Heart left ventricle (tissue), 16 donors: ENCODE measurements at regions of chr20 and their contacts with region 1.

Region 1: GRCh38 chr20:60050158-60050947 is 92.1 kb downstream of the CDH26 start:
- DNase-seq: no peak
- ATAC-seq: no peak
- H3K4me3 ChIP-seq: no peak overlapping the region
- H3K27ac ChIP-seq: no peak overlapping the region
- H3K4me1 ChIP-seq: peaks cover 0 to 22% (median 0%) of the 10 kb centered on the region in 12 donors
- H3K27me3 ChIP-seq: peaks cover 0 to 11% (median 4%) of the 10 kb centered on the region in 9 donors
- CTCF ChIP-seq: peak in 2 of 12 donors; percentile 12 to 26
- POLR2A ChIP-seq: no peak

Region 2: DNA sequence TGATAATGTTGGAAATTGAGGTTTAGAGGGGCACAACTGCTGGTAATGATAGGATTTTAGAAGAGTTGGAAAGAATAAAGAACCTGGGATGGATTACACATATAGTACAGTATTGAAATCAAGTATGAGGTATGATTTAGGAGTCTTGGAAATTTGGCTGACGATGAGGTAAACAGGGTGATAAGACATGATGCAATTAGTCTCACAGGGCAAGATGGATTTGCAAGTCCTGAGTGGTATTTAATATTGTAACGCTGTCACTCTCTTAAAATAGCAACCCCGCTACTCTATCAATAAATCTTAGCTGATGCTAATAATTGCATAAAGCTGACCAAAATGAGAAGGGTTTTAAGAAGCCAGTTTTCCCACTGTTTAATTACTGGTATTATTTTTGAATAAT is 187.3 kb before region 1 on chr20:
- intact Hi-C with region 1: no loop called
- DNase-seq: no peak
- ATAC-seq: peak in 1 of 4 donors; percentile 54
- H3K4me3 ChIP-seq: no peak overlapping the region
- H3K27ac ChIP-seq: no peak overlapping the region
- H3K4me1 ChIP-seq: no peaks in the 10 kb centered on the region
- H3K27me3 ChIP-seq: no peaks in the 10 kb centered on the region
- CTCF ChIP-seq: no peak
- POLR2A ChIP-seq: no peak

Region 3: GRCh38 chr20:59912609-59913008 is 137.7 kb before region 1 on chr20:
- intact Hi-C with region 1: no loop called
- DNase-seq: no peak
- ATAC-seq: no peak
- H3K4me3 ChIP-seq: no peak overlapping the region
- H3K27ac ChIP-seq: no peak overlapping the region
- H3K4me1 ChIP-seq: no peaks in the 10 kb centered on the region
- H3K27me3 ChIP-seq: no peaks in the 10 kb centered on the region
- CTCF ChIP-seq: no peak
- POLR2A ChIP-seq: no peak

Region 4: DNA sequence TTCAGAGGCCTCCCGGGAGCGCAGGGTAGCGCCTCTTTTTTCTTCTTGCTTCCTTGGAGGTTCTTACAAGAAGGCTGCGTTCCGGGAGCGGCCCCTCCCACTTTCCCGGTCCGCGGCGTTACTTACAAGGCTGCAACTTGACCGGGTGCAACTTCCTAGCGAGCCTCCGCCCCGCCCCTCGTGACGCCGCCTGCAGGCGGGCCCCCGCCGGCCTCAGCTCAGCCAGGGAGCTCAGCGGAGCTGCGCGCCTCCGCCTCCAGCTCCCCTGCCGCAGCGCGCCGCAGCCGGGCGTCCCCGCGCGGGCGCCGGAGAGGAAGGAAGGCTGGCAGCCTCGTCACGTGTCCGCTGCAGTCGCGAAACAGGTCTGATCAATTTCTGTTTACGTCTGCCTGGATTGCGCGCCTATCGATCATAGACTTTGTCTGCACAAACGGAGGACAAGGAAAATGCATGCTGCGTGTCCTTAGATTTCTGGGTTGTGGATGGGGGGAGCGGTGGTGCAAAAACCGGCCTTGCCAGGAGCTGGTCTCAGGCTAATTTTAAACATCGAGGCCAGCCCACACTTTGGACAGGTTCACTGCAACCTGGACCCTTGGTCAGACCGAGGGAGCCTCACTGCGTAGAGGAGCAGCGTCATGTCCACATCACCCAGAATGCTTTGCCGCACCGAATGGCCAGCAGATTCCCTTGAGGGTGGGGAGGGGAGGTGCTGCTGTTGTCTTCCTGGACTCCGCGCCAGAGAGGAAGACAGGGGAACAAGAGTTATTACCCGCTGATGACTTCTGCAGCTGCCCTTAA is 110.0 kb before region 1 on chr20 and contains the starts of genes FAM217B and PPP1R3D:
- intact Hi-C with region 1: loop called in 4 of 10 experiments (anchors 5 to 10 kb)
- DNase-seq: peak; percentile 98 to 99 (median 98)
- ATAC-seq: peak; percentile 89 to 96 (median 94)
- H3K4me3 ChIP-seq: peak within 1 kb of the TSS; percentile 49 to 90 (median 76)
- H3K27ac ChIP-seq: peak within 1 kb of the TSS; percentile 90 to 99 (median 96)
- H3K4me1 ChIP-seq: peaks cover 3 to 68% (median 51%) of the 10 kb centered on the region in 12 donors
- H3K27me3 ChIP-seq: no peaks in the 10 kb centered on the region
- CTCF ChIP-seq: peak in 6 of 12 donors; percentile 15 to 46 (median 30)
- POLR2A ChIP-seq: peak in 1 of 2 donors; percentile 88
- total RNA-seq, gene FAM217B: 16.7 to 38.0 (median 26.4) TPM
- total RNA-seq, gene PPP1R3D: 9.1 to 14.7 (median 12.7) TPM

Region 5: DNA sequence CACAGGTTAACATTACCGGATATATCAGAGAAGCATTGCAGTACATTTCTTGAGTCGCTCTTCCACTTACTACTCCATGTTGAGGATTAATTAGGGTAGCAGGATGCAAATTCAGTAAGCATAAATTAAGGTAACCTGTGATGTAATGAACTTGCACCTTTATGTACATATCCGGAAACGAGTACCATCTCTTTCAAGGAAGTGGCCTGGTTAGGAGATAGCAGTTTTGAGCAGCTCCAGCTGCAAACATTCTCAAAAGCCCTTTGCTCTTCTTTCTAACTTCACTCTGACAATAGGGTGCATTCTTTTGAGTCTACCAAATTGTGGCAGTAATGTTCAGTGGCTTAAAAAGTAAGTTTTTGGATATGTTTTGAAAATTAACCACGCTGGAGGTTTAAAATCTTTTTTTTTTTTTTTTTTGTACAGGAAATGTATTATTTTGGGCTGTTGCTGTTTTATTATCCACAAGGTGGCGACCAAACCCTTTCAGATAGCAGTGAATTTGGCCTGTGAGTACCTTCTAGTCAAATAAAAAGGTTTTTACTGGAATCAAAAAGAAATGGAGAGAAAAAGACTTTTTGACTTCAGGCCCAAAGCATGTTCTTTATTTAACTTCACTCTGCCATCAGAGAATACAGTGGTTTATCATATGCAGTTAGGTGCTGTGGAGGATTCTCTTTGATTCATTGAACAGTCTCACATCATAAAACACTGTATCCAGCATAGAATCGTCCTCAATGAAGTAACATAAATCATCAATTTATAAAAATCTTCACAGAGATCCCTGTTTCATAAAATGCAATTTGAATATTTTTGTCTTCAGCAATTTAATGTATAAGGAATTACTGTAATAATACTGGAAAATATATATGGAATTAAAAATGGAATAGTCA is 101.3 kb before region 1 on chr20:
- intact Hi-C with region 1: loop called in 4 of 10 experiments (anchors 5 to 10 kb)
- DNase-seq: no peak
- ATAC-seq: peak in 2 of 4 donors; percentile 28 to 41
- H3K4me3 ChIP-seq: no peak overlapping the region
- H3K27ac ChIP-seq: peak overlapping the region in 2 of 12 donors; percentile 4 to 35
- H3K4me1 ChIP-seq: peaks cover 0 to 40% (median 19%) of the 10 kb centered on the region in 12 donors
- H3K27me3 ChIP-seq: no peaks in the 10 kb centered on the region
- CTCF ChIP-seq: peak; percentile 40 to 78 (median 66)
- POLR2A ChIP-seq: no peak

Region 6: GRCh38 chr20:60123652-60124051 is 73.3 kb after region 1 on chr20:
- intact Hi-C with region 1: no loop called
- DNase-seq: no peak
- ATAC-seq: no peak
- H3K4me3 ChIP-seq: no peak overlapping the region
- H3K27ac ChIP-seq: no peak overlapping the region
- H3K4me1 ChIP-seq: no peaks in the 10 kb centered on the region
- H3K27me3 ChIP-seq: peaks cover 0 to 3% (median 0%) of the 10 kb centered on the region in 9 donors
- CTCF ChIP-seq: no peak
- POLR2A ChIP-seq: no peak